Activated naive CD4-positive, alpha-beta T cell treated with anti-CD3 and anti-CD28 coated beads, Interleukin-2, amount 10 ng/mL, durations not matched to agents 7 days and 5 days (primary cell): ENCODE measurements at regions of chr7 and their contacts with region 1.

Region 1: DNA sequence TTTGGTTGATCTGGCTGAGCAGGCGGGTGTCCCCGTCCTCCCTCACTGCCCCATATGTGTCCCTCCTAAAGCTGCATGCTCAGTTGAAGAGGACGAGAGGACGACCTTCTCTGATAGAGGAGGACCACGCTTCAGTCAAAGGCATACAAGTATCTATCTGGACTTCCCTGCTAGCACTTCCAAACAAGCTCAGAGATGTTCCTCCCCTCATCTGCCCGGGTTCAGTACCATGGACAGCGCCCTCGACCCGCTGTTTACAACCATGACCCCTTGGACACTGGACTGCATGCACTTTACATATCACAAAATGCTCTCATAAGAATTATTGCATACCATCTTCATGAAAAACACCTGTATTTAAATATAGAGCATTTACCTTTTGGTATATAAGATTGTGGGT is 26.9 kb upstream of the TRIM56 start:
- DNase-seq: peak; percentile 80
- H3K4me3 Mint-ChIP-seq: no peak overlapping the region
- H3K27ac Mint-ChIP-seq: no peak overlapping the region
- H3K4me1 Mint-ChIP-seq: no peaks in the 10 kb centered on the region
- H3K27me3 Mint-ChIP-seq: peaks cover 43% of the 10 kb centered on the region

Region 2: GRCh38 chr7:100632951-100633717 is 425.2 kb before region 1 on chr7:
- CTCF ChIA-PET with region 1: no interaction called
- DNase-seq: peak; percentile 78
- H3K4me3 Mint-ChIP-seq: peak overlapping the region; percentile 79
- H3K27ac Mint-ChIP-seq: peak overlapping the region; percentile 70
- H3K4me1 Mint-ChIP-seq: peaks cover 52% of the 10 kb centered on the region
- H3K27me3 Mint-ChIP-seq: peaks cover 55% of the 10 kb centered on the region

Region 3: DNA sequence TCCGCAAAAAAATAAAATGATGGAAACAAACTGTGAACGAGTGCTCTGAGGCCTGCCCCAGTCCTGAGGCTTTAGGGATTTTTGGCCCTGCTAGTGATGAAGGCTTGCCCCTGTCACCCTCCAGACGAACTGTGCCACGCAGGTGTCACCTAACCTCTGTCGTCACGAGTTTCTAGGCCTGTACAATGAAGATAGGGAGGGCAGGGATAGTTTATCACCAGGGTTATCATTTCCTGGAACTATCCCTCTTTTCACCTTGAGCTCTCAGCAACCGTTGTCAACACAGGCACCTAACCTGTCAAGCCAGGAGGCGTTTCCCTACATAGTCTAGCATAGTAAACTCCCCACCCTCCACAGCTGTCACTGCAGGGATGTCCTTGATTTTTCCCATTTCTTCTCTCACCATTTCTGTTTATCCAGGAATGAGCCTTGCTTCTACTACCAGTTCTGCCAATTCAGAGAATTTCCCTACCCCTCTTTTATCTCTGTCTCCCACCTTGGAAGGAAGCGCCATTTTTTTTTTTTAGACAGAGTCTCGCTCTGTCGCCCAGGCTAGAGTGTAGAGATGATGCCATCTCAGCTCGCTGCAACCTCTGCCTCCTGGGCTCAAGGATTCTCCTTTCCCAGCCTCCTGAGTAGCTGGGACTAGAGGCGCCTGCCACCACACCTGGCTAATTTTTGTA is 160.4 kb before region 1 on chr7:
- CTCF ChIA-PET with region 1: interaction called, 21 read pairs
- DNase-seq: no peak
- H3K4me3 Mint-ChIP-seq: no peak overlapping the region
- H3K27ac Mint-ChIP-seq: no peak overlapping the region
- H3K4me1 Mint-ChIP-seq: peaks cover 14% of the 10 kb centered on the region
- H3K27me3 Mint-ChIP-seq: peaks cover 85% of the 10 kb centered on the region